Head of caudate nucleus (tissue), 42 donors: ENCODE measurements at regions of chr5 and their contacts with region 1.

Region 1: GRCh38 chr5:160508780-160509361 is 87.2 kb downstream of the PTTG1 start:
- DNase-seq: peak in 40 of 42 donors; percentile 20 to 89 (median 66)

Region 2: DNA sequence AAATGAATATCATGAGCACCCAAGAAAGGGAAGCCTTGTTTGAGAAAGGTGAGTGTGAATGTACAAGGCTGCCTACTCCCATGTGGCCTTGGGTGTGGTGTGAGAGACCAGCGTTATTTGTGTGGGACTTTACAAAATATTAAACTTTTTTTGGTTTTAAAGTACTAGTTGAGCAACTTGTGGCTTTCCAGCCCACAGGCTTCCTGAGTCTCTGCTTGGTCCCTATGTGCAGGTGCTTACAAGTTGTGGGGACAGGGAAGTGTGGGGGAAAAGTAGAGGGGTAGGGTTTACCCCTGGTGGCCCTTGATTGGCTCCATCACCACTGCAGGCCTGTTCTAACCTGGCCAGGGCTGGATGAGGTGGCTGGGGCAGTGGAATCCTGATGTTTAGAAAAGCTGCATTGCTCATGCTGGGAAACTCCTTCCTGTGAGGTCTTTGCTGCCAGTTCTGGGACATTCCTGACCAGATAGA is 67.5 kb before region 1 on chr5:
- intact Hi-C with region 1: loop called (anchors 10 kb)
- DNase-seq: no peak